B cell (primary cell): ENCODE measurements at regions of chr7 and their contacts with region 1.

Region 1: GRCh38 chr7:2821161-2821841 is 22.8 kb downstream of the GNA12 start:
- DNase-seq: peak; percentile 78
- ATAC-seq: peak; percentile 60
- H3K4me3 ChIP-seq: peak overlapping the region in 2 of 5 experiments; percentile 16 to 21
- H3K4me3 Mint-ChIP-seq: peak overlapping the region; percentile 86
- H3K27ac ChIP-seq: peak overlapping the region; percentile 52 to 68
- H3K27ac Mint-ChIP-seq: peak overlapping the region; percentile 87
- H3K4me1 ChIP-seq: peaks cover 49 to 54% of the 10 kb centered on the region in 2 donors
- H3K4me1 Mint-ChIP-seq: peaks cover 72% of the 10 kb centered on the region
- H3K27me3 ChIP-seq: no peaks in the 10 kb centered on the region
- H3K27me3 Mint-ChIP-seq: no peaks in the 10 kb centered on the region
- CTCF ChIP-seq: no peak

Region 2: GRCh38 chr7:2838873-2839578 is 17.7 kb after region 1 on chr7:
- CTCF ChIA-PET with region 1: no interaction called
- POLR2A ChIA-PET with region 1: interaction called, 3 read pairs
- intact Hi-C with region 1: loop called (anchors 2 kb)
- DNase-seq: peak; percentile 84
- ATAC-seq: peak; percentile 89
- H3K4me3 ChIP-seq: peak overlapping the region in 1 of 5 experiments; percentile 5
- H3K4me3 Mint-ChIP-seq: peak overlapping the region; percentile 69
- H3K27ac ChIP-seq: peak overlapping the region; percentile 81
- H3K27ac Mint-ChIP-seq: peak overlapping the region; percentile 87
- H3K4me1 ChIP-seq: peaks cover 55 to 69% of the 10 kb centered on the region in 2 donors
- H3K4me1 Mint-ChIP-seq: peaks cover 69% of the 10 kb centered on the region
- H3K27me3 ChIP-seq: no peaks in the 10 kb centered on the region
- H3K27me3 Mint-ChIP-seq: no peaks in the 10 kb centered on the region
- CTCF ChIP-seq: no peak